Gastrocnemius medialis (tissue), 4 donors: ENCODE measurements at regions of chr11 and their contacts with region 1.

Region 1: GRCh38 chr11:129895126-129896041 is at the start of gene NFRKB:
- DNase-seq: peak; percentile 59 to 73
- ATAC-seq: peak; percentile 91 to 93
- H3K4me3 ChIP-seq: peak within 1 kb of the TSS; percentile 76 to 100 (median 96)
- H3K27ac ChIP-seq: peak within 1 kb of the TSS; percentile 85 to 96 (median 92)
- H3K4me1 ChIP-seq: peaks cover 13 to 18% of the 10 kb centered on the region in 2 donors
- H3K27me3 ChIP-seq: no peaks in the 10 kb centered on the region
- CTCF ChIP-seq: no peak
- POLR2A ChIP-seq: peak; percentile 53 to 57
- total RNA-seq, gene NFRKB: 22.5 to 34.3 (median 23.4) TPM

Region 2: DNA sequence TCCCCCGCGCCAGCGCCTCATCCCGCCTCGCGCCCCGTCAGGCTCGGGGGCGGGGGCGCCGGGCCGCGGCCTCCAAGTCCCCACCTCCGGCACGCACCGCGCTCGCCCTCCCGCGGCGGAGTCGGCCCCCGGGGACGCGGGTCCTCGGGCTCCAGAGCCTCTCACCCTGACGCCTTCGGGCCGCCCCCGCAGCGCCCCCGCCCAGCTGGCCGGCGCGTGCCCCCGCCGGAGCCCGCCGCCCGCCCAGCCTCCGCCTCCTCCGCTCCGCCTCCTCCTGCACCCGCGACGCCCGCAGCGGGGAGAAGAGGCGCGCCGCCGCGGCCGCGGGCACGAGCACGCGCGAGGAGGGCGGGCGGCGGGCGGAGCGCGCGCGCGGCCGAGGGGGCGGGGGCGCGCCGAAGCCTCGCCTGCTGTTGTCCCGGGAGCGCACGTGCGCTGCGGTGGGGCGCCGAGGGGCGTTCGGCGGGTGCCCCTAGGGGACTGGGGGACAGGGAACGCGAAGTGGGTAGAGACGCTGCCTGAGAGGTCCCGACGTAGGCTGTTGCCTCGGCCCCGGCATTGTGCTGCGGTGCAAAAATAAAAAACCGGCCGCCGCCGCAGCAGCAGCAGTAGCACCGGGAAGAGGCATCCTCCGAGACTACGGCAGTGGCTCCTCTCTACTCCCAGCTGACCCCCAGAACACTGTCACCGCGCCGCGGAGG is 615.9 kb before region 1 on chr11:
- in situ Hi-C with region 1: no loop called
- intact Hi-C with region 1: loop called (anchors 2 kb)
- DNase-seq: peak; percentile 52 to 69
- ATAC-seq: peak; percentile 84 to 87
- H3K4me3 ChIP-seq: peak overlapping the region; percentile 51 to 74 (median 63)
- H3K27ac ChIP-seq: peak overlapping the region; percentile 67 to 70 (median 68)
- H3K4me1 ChIP-seq: peaks cover 37 to 46% of the 10 kb centered on the region in 2 donors
- H3K27me3 ChIP-seq: no peaks in the 10 kb centered on the region
- CTCF ChIP-seq: no peak
- POLR2A ChIP-seq: peak; percentile 62

Region 3: DNA sequence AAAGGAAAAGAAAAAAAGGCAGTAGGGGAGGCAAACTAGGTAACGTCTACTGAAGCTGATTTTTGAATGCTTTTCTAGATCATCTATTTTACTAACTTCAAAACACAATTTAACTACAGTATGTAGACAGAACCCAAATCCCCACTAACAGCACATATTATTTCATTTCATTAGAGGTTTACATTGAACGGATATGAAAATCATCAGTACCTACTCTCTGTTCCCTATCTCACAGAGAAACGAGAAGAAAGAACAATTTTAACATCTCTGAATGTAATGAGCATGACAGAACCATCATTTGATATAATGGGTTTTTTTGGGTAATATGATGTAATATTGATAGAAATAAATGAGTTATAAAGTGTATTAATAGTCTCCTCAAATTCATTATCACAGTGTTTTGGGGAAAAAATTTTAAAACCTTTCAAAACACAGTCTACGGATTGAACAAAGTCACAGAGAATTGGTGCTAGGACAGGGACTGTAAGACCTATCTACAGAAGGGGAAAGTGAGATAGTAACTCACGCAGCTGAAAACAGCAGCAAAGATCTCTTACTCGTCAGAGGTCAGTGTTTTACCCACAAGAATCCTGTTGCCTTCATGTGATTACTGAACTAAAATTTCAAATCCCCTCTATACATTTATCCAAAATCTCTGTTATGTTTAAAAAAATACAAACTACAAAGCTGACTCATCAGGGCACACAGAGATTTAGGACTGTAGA is 342.1 kb after region 1 on chr11:
- in situ Hi-C with region 1: no loop called
- intact Hi-C with region 1: no loop called
- DNase-seq: no peak
- ATAC-seq: no peak
- H3K4me3 ChIP-seq: no peak overlapping the region
- H3K27ac ChIP-seq: no peak overlapping the region
- H3K4me1 ChIP-seq: no peaks in the 10 kb centered on the region
- H3K27me3 ChIP-seq: no peaks in the 10 kb centered on the region
- CTCF ChIP-seq: no peak
- POLR2A ChIP-seq: no peak